HCT116 (cell line): ENCODE measurements at regions of chr11 and their contacts with region 1.

Region 1: GRCh38 chr11:119572481-119573424 is 149.8 kb upstream of the THY1 start:
- DNase-seq: peak; percentile 43
- ATAC-seq: peak; percentile 80
- H3K4me3 ChIP-seq: peak overlapping the region in 1 of 2 experiments; percentile 7; a peak in 2 of 4 replicates
- H3K27ac ChIP-seq: peak overlapping the region; percentile 21; the same call in 1 of the 2 replicates
- H3K4me1 ChIP-seq: peaks cover 11 to 36% of the 10 kb centered on the region in 2 experiments
- H3K27me3 ChIP-seq: no peaks in the 10 kb centered on the region
- CTCF ChIP-seq: peak in 2 of 3 experiments; percentile 41 to 49; a peak in 4 of 6 replicates
- POLR2A ChIP-seq: no peak
- RAD21 ChIP-seq: no peak

Region 2: GRCh38 chr11:119560291-119560690 is 12.5 kb before region 1 on chr11:
- CTCF ChIA-PET with region 1: no interaction called
- POLR2A ChIA-PET with region 1: no interaction called
- RAD21 ChIA-PET with region 1: no interaction called
- intact Hi-C with region 1: no loop called
- DNase-seq: no peak
- ATAC-seq: no peak
- H3K4me3 ChIP-seq: no peak overlapping the region
- H3K27ac ChIP-seq: no peak overlapping the region
- H3K4me1 ChIP-seq: no peaks in the 10 kb centered on the region
- H3K27me3 ChIP-seq: no peaks in the 10 kb centered on the region
- CTCF ChIP-seq: no peak
- POLR2A ChIP-seq: no peak
- RAD21 ChIP-seq: no peak

Region 3: DNA sequence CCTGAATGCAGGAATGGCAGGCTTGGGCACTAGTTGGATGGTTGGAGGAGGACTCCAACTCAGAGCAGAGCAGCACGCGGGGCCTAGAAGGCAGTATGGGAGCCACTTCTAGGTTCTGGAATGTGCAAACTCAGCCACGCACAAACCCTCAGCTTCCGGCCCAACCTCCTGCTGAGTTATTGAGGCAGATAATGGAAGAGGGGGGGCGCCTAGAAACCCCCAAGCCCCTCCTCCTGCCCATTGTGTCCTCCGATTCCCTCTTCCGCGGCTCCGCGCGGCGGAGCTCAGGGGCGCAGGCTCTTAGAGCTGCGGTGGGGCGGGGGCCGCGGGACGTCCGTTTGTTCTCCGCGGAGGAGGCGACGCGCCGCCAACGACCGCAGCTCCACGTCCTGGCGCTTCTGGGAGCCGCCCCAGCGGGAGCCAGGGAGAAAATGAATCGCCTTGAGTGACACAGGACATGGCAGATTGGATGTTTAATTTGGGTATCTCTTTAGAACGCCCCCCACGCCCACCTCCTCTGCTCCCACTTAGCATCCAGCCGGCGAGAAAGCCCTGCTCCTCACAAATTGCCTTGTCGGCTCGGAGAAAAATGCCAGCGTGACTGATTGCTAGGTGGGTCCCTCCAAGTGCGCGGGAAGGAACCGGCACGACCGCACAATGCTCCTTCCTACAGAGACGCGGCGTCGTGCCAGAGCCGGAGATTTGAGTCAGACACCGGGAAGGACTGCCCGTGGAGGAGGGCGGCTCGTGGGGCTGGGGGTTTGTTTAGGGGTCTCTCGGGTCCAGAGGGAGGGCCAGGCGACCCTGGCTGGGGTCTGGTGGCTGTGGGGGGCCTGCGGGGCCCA is 11.7 kb after region 1 on chr11:
- CTCF ChIA-PET with region 1: interaction called, 10 read pairs
- POLR2A ChIA-PET with region 1: no interaction called
- RAD21 ChIA-PET with region 1: no interaction called
- intact Hi-C with region 1: no loop called
- DNase-seq: no peak
- ATAC-seq: peak; percentile 87
- H3K4me3 ChIP-seq: peak overlapping the region; percentile 41 to 60
- H3K27ac ChIP-seq: peak overlapping the region; percentile 37; the same call in 1 of the 2 replicates
- H3K4me1 ChIP-seq: peaks cover 11 to 31% of the 10 kb centered on the region in 2 experiments
- H3K27me3 ChIP-seq: no peaks in the 10 kb centered on the region
- CTCF ChIP-seq: no peak
- POLR2A ChIP-seq: no peak
- RAD21 ChIP-seq: no peak

Region 4: DNA sequence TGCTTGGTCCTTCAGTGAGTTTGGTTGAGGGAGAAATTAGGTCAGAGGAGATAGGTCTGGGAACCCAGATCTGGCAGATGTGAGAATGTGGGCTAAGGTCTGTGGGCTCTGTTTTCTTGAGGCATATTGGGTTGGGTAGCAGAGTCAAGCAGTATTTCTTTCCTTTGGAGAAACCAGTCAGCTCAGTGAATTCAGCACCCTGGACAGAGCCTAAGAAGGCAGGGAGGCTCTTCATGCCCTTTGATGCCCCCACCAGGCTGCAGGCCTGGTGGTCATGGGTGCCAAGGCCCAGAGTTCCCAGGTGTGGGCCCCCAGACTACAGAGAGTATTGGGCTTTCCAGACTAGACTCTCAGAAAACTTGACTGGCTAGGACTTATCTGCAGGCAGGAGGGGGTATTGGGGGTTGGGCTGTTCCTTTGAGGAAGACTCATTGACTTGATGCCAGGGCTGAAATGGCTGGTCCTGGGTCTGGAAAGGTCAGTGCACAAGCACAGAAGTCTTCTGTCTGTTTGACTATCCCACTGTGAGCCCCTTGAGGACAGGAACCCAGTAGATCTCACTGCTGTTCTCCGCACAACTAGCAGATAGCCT is 201.5 kb after region 1 on chr11:
- CTCF ChIA-PET with region 1: no interaction called
- POLR2A ChIA-PET with region 1: no interaction called
- RAD21 ChIA-PET with region 1: no interaction called
- intact Hi-C with region 1: no loop called
- DNase-seq: no peak
- ATAC-seq: no peak
- H3K4me3 ChIP-seq: no peak overlapping the region
- H3K27ac ChIP-seq: no peak overlapping the region
- H3K4me1 ChIP-seq: no peaks in the 10 kb centered on the region
- H3K27me3 ChIP-seq: peaks cover 35% of the 10 kb centered on the region
- CTCF ChIP-seq: no peak
- POLR2A ChIP-seq: no peak
- RAD21 ChIP-seq: no peak